Left colon (tissue), 2 donors: ENCODE measurements at regions of chr11 and their contacts with region 1.

Region 1: GRCh38 chr11:19561011-19561410 is 151.6 kb upstream of the NAV2 start:
- DNase-seq: no peak
- ATAC-seq: no peak

Region 2: DNA sequence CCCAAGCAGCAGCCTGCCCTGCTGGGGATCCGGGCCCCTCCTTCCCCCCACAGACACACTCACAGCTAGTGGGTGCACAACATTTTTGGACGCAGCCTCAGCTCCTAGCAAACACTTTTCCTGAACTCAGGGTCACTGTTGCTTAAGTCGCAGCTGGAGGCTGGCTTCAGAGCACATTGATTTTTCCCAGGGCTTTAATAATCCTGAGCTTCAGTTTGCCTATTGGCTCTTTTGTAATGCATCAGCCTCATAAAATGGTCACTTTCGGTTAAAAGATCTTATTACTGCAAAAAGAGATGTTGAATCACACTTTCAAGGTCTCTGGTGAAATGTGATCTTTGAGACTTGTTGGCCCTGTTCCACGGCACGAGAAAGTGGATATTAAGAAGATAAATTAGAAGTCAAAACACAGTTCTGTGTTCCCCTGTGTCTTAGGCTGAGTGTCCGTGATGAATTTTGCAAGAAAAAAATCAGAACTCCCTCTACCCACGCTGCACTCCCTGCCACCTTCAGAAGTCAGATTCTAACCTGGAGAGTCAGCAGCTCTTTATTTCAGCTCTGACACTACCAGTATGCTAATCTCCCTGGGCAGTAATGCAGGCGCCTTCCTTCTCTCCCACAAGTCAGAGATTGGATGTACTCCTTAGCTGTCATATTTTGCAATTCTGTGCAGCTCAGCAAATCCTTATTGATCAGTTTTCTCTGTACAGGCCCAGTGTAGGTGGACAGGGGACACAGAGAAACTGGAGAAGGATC is 162.1 kb before region 1 on chr11:
- intact Hi-C with region 1: no loop called
- DNase-seq: peak in 1 of 2 donors; percentile 31
- ATAC-seq: no peak

Region 3: DNA sequence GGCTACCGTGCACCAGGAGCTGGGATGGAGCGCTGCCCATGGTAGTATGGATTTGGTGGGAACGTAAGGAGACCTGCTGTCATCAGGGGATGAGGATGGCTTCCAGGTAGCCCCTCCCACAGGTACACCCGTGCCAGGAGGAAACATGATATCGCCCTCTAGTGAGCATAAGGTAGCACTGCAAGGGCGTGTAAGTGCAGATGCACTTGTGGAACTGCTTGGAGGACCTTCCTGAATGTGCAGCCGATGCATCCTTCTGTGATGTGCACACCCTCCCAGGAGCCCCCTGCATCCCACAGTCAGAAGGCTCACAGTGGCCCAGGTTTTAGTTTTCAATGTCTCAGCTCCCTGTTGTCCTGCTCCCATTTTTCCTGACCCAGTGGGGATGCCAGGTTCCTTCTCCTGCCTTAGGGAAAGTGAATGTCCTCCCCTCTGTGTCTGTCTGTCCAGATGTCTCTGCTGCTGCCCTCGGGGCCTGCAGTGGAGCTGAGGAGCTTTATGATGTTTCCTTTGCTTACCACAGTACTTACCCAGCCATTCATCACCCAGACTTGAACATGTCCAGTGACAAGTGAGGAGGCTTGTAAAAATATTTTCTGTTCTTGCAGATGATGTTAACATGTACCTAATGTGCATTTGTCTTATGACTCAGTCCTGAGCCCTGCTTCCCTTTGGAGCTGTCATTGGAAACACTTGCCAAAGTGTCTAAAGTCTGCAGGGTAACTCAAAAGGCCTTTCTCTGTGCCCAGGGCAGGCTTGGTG is 550.1 kb after region 1 on chr11:
- intact Hi-C with region 1: loop called in 1 of 2 experiments (anchors 10 kb)
- DNase-seq: peak; percentile 41 to 48
- ATAC-seq: peak; percentile 69